ENCODE measurements at regions of chr20 and their contacts with region 1.

Region 1: DNA sequence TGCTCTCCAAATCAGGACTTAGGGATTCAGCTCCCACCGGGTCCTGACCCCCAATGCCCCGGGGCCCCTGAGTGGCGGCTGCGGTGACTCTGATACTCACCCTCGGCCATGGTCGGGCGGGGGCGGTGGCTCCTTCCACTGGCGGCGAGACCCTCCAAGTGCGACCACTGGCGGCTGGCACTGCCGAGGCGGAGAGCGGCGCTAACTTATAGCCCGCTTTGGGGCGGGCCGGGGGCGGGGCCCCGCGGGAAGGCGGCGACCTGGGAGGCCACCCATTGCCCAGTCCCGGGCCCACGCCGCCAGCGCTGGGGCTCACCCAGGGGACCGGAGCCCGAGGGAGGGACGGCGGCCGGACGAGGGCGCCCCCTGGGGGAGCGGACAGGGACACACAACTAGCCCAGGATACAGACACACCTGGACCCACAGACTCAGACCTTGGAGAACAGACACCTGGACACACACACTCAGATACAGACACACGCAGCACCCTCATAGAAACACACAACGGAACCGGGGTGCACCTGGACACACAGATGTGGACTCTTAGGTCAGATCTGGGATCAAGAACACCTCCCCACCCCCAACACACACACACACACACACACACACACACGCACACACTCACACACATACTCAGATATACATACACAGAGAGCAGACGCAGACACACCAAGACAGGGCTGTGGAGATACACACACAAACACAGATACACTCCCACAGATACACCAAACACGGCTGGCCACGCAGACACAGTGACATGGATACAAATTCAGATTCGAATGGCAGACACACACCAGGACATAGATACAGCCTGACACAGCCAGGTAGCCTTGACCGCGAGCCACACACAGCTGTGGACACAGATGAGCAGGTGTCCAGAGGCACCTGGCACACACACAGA is at the start of gene TGM2:
- DNase-seq: peak; percentile 89
- H3K4me3 ChIP-seq: peak within 1 kb of the TSS; percentile 48 to 62 (median 50)
- H3K27ac ChIP-seq: peak within 1 kb of the TSS; percentile 67 to 86 (median 74)
- H3K4me1 ChIP-seq: peaks cover 0 to 61% (median 32%) of the 10 kb centered on the region in 4 donors
- H3K27me3 ChIP-seq: no peaks in the 10 kb centered on the region
- CTCF ChIP-seq: peak; percentile 80 to 93 (median 84)
- EP300 ChIP-seq: no peak
- POLR2A ChIP-seq: no peak
- total RNA-seq, gene TGM2: 14.8 to 104 (median 60.7) TPM

Region 2: GRCh38 chr20:38057351-38057972 is 107.9 kb before region 1 on chr20:
- intact Hi-C with region 1: loop called (anchors 1 kb)
- DNase-seq: peak; percentile 89
- H3K4me3 ChIP-seq: no peak overlapping the region
- H3K27ac ChIP-seq: no peak overlapping the region
- H3K4me1 ChIP-seq: no peaks in the 10 kb centered on the region
- H3K27me3 ChIP-seq: no peaks in the 10 kb centered on the region
- CTCF ChIP-seq: peak; percentile 66 to 94 (median 87)
- EP300 ChIP-seq: no peak
- POLR2A ChIP-seq: no peak

Region 3: GRCh38 chr20:38073307-38074071 is 91.8 kb before region 1 on chr20:
- intact Hi-C with region 1: loop called (anchors 2 kb)
- DNase-seq: peak; percentile 92
- H3K4me3 ChIP-seq: no peak overlapping the region
- H3K27ac ChIP-seq: peak overlapping the region; percentile 71 to 86 (median 80)
- H3K4me1 ChIP-seq: peaks cover 0 to 58% (median 47%) of the 10 kb centered on the region in 4 donors
- H3K27me3 ChIP-seq: no peaks in the 10 kb centered on the region
- CTCF ChIP-seq: peak; percentile 71 to 81 (median 80)
- EP300 ChIP-seq: no peak
- POLR2A ChIP-seq: no peak

Region 4: GRCh38 chr20:38286586-38287531 is 121.5 kb after region 1 on chr20:
- intact Hi-C with region 1: no loop called
- DNase-seq: peak; percentile 67
- H3K4me3 ChIP-seq: no peak overlapping the region
- H3K27ac ChIP-seq: peak overlapping the region in 2 of 4 donors; percentile 6 to 46
- H3K4me1 ChIP-seq: peaks cover 0 to 5% (median 0%) of the 10 kb centered on the region in 4 donors
- H3K27me3 ChIP-seq: peaks cover 0 to 7% (median 0%) of the 10 kb centered on the region in 3 donors
- CTCF ChIP-seq: no peak
- EP300 ChIP-seq: no peak
- POLR2A ChIP-seq: no peak

Measured in sigmoid colon (tissue), 7 donors.